Aorta (tissue), 5 donors: ENCODE measurements at regions of chr5 and their contacts with region 1.

Region 1: GRCh38 chr5:126384985-126385384 is 38.2 kb upstream of the GRAMD2B start:
- DNase-seq: no peak
- ATAC-seq: peak; percentile 77
- H3K4me3 ChIP-seq: no peak overlapping the region
- H3K27ac ChIP-seq: peak overlapping the region; percentile 99
- H3K4me1 ChIP-seq: peaks cover 4 to 17% of the 10 kb centered on the region in 2 donors
- H3K27me3 ChIP-seq: no peaks in the 10 kb centered on the region

Region 2: DNA sequence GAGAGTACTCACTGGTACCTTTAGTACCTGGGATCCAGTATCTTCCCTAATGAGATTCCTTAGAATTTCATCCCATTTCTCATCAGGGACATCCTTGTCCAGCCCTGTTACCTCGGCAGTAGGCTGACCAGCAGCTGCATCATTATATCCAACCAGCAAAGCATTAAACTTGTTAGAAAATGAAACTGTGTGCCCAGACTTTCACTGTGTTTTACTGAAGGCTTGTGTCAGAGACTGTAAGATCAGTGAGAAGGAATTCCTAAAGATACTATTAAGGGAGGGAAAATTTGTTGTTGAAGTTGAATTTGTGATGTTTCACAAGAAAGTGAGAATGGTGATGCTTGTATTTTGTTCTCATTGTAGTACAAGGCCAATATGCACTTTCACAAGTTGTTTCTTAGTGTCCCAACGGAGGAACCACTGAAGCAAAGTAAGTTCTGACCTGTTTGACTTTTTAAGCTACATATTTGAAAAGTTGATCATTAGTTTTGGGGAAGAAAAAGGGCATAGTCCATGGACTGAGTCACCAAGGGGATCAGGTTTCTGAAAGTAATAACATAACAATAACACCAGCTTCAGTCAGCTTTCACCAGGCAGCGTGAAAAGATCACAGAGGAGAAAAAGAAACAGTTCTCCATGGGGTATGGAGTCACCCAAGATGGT is 87.0 kb after region 1 on chr5:
- intact Hi-C with region 1: loop called in 1 of 2 experiments (anchors 5 kb)
- DNase-seq: no peak
- ATAC-seq: no peak
- H3K4me3 ChIP-seq: no peak overlapping the region
- H3K27ac ChIP-seq: peak overlapping the region; percentile 38 to 76
- H3K4me1 ChIP-seq: peaks cover 1 to 3% of the 10 kb centered on the region in 2 donors
- H3K27me3 ChIP-seq: no peaks in the 10 kb centered on the region